Body of pancreas (tissue), 4 donors: ENCODE measurements at regions of chr12 and their contacts with region 1.

Region 1: GRCh38 chr12:95117178-95117599 is 43.8 kb upstream of the NR2C1 start:
- DNase-seq: peak; percentile 72 to 86 (median 82)
- ATAC-seq: peak; percentile 83
- H3K4me3 ChIP-seq: no peak overlapping the region
- H3K27ac ChIP-seq: peak overlapping the region in 3 of 4 donors; percentile 22 to 64 (median 40)
- H3K4me1 ChIP-seq: peaks cover 20% of the 10 kb centered on the region
- H3K27me3 ChIP-seq: no peaks in the 10 kb centered on the region
- CTCF ChIP-seq: peak; percentile 43 to 89 (median 80)
- POLR2A ChIP-seq: no peak

Region 2: GRCh38 chr12:94792693-94793092 is 324.5 kb before region 1 on chr12:
- intact Hi-C with region 1: no loop called
- DNase-seq: peak in 1 of 4 donors; percentile 26
- ATAC-seq: no peak
- H3K4me3 ChIP-seq: no peak overlapping the region
- H3K27ac ChIP-seq: no peak overlapping the region
- H3K4me1 ChIP-seq: no peaks in the 10 kb centered on the region
- H3K27me3 ChIP-seq: no peaks in the 10 kb centered on the region
- CTCF ChIP-seq: no peak
- POLR2A ChIP-seq: no peak

Region 3: DNA sequence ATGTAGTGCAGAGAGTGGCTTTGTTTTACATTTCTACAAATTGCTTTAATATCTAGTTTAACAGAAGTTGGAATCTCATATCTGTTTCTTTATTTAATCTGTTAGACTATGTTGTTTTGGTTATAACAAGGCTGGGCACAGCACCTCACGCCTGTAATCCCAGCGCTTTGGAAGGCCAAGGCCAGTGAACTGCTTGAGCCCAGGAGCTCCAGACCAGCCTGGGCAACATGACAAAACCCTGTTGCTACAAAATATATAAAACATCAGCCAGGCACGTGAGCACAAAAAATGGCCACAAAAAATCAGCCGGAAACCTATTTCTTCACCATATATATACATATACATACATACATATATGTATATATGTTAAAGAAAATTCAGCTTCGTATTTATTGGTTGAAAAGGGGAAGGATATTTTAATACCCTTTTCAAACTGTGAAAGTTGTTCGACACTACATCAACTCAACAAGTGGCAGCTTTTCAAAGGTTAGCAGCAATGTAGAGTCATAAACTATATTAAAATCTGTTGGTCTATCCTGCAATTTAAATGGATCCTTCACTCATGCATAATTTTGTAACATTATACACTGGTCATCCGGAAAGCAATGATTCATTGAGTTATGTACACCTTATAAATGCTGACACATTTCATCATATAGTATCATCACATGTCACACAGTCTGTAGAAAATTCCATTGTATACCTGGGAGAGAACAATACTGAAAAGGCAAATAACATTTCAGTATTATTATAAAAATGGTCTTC is 50.9 kb before region 1 on chr12:
- intact Hi-C with region 1: no loop called
- DNase-seq: no peak
- ATAC-seq: no peak
- H3K4me3 ChIP-seq: no peak overlapping the region
- H3K27ac ChIP-seq: no peak overlapping the region
- H3K4me1 ChIP-seq: peaks cover under 1% of the 10 kb centered on the region
- H3K27me3 ChIP-seq: no peaks in the 10 kb centered on the region
- CTCF ChIP-seq: no peak
- POLR2A ChIP-seq: no peak

Region 4: DNA sequence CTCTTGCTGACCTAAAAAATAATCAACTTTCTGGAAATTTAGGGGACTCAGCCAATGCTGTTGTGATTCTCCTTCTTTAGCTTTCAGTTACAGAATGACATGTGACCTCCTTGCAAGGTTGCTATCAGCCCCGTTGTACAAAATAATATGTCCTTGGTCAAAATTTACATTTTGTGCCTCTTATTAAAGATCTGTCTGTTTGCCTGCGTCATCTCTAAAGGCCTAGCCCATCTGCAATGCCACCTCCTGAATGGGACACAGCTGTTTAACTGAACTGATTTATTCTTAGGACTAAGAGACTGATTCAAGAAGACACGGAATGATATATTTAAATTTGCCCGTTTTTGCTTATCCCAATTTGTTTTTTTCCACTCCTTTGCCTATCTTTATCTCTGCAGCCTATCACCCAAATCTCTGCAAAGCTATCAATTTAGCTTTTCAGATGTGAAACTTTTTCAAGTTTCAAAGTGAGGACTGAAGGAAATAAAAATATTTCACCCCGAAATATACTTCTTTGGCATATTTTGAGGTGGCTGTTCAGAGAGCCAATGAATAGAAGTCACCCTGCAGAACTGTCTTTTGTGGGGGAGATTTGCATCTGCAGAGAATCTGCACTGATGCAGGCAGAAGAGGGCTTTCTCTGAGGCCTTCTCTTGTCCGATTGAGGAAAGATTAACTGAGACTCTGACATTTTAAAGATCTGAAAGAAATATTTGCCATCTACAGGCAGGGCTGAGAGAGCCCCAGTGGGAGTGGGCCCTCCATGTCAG is 226.5 kb after region 1 on chr12:
- intact Hi-C with region 1: loop called (anchors 5 kb)
- DNase-seq: no peak
- ATAC-seq: no peak
- H3K4me3 ChIP-seq: no peak overlapping the region
- H3K27ac ChIP-seq: no peak overlapping the region
- H3K4me1 ChIP-seq: no peaks in the 10 kb centered on the region
- H3K27me3 ChIP-seq: no peaks in the 10 kb centered on the region
- CTCF ChIP-seq: no peak
- POLR2A ChIP-seq: no peak